CD4-positive, alpha-beta memory T cell (primary cell): ENCODE measurements at regions of chr19 and their contacts with region 1.

Region 1: DNA sequence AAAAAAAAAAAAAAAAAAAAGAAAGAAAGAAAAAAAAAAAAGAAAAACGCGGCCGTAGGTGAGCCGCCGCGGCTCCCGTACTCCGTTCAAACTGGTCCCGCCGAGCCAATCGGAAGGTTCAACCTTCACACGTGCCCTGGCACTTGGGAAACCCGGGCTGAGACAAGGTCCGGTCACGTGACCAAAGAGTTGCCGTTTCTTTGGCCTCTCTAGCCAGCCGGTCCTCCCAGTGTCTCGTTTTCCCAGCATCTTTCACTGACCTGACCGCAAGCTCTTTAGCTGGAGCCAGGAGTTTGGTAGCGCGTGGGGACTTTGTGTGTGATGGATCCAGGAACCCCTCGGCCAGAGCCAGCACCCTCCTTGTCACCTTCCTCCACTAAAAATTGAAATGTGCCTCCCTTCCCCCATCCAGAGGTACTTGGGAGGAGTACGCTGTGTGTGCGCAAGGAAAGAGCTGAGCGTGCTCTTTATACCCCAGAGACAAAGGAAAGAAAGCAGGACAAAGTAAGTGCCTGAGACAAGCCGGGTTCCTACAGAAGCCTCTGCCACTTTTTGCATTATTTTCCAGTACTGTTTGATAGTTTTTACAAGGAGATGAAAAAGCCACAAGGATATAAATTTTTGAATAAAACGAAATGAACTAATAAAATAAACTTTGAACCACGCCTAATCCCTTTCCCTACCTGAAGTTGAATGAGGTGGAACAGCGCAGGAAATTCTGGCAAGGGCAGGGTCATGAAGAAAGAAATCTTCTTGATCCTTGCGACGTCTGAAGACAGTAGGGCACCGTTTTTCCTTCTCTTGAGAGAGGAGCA is 959 bp downstream of the TNPO2 start:
- DNase-seq: peak; percentile 91 to 97 (median 95)
- H3K4me3 ChIP-seq: peak overlapping the region; percentile 21 to 78
- H3K4me3 Mint-ChIP-seq: peak overlapping the region; percentile 87 to 98 (median 92)
- H3K27ac ChIP-seq: peak overlapping the region; percentile 73
- H3K27ac Mint-ChIP-seq: peak overlapping the region; percentile 88 to 98 (median 93)
- H3K4me1 ChIP-seq: peaks cover 30% of the 10 kb centered on the region
- H3K4me1 Mint-ChIP-seq: peaks cover 21 to 54% (median 35%) of the 10 kb centered on the region in 4 donors
- H3K27me3 ChIP-seq: no peaks in the 10 kb centered on the region
- H3K27me3 Mint-ChIP-seq: peaks cover 0 to 1% of the 10 kb centered on the region in 2 donors

Region 2: GRCh38 chr19:12681074-12681951 is 41.5 kb before region 1 on chr19 and contains the start of gene DHPS:
- CTCF ChIA-PET with region 1: interaction called, 4 read pairs
- POLR2A ChIA-PET with region 1: interaction called, 11 read pairs
- intact Hi-C with region 1: loop called (anchors 5 kb)
- DNase-seq: peak; percentile 90 to 96 (median 94)
- H3K4me3 ChIP-seq: peak within 1 kb of the TSS; percentile 73 to 98
- H3K4me3 Mint-ChIP-seq: peak within 1 kb of the TSS; percentile 90 to 99 (median 98)
- H3K27ac ChIP-seq: peak within 1 kb of the TSS; percentile 98
- H3K27ac Mint-ChIP-seq: peak within 1 kb of the TSS; percentile 83 to 99 (median 97)
- H3K4me1 ChIP-seq: peaks cover 22% of the 10 kb centered on the region
- H3K4me1 Mint-ChIP-seq: peaks cover 12 to 35% (median 25%) of the 10 kb centered on the region in 4 donors
- H3K27me3 ChIP-seq: no peaks in the 10 kb centered on the region
- H3K27me3 Mint-ChIP-seq: no peaks in the 10 kb centered on the region
- total RNA-seq, gene DHPS: 195 to 197 TPM

Region 3: DNA sequence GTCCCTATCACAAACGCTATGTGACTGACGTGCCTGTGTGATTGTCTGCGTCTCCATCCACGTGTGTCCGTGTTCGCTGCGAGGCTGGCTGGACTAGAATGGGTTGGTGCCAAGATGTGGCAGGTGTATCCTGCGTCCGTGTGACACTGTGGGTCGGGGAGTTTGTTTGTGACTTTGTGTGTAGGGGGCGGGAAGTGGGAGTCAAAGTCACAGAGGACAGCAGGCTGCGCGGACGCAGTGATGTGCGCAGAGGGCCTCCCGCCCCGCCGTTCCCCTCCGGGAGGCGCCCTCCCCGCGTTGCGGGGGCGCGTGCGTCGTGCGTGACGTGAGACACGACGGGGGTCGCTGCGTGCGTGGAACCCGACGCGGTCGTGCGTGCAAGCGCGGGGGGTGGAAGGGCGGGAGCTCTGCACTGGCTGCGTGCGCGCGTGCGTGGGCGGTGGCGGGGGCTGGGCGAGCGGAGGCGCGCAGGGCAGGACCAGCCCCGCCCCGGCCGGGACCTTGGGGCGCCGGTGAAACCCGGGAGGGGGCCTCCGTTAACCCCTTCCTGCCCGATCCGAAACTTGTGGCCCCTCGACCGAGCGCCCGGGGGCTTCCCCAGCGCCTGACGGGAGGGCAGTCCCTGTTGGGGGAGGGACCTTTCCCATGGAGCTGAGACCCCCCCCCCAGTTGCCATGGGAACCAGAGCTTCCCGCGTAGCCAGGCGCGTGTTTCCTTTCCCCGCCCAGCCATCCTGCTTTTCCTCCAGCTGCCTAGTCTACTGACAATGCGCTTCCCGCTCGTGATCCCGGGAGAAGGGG is 59.7 kb after region 1 on chr19:
- CTCF ChIA-PET with region 1: no interaction called
- POLR2A ChIA-PET with region 1: interaction called, 11 read pairs
- intact Hi-C with region 1: no loop called
- DNase-seq: peak; percentile 96 to 99 (median 98)
- H3K4me3 ChIP-seq: peak overlapping the region; percentile 40 to 71
- H3K4me3 Mint-ChIP-seq: peak overlapping the region; percentile 79 to 95 (median 88)
- H3K27ac ChIP-seq: peak overlapping the region; percentile 99
- H3K27ac Mint-ChIP-seq: peak overlapping the region in 2 of 7 donors; percentile 98 to 99
- H3K4me1 ChIP-seq: peaks cover 71% of the 10 kb centered on the region
- H3K4me1 Mint-ChIP-seq: peaks cover 20 to 44% (median 30%) of the 10 kb centered on the region in 4 donors
- H3K27me3 ChIP-seq: no peaks in the 10 kb centered on the region
- H3K27me3 Mint-ChIP-seq: no peaks in the 10 kb centered on the region